ENCODE measurements at regions of chr13 and their contacts with region 1.

Region 1: GRCh38 chr13:91185294-91185863 is 162.1 kb upstream of the MIR17HG start:
- DNase-seq: no peak
- ATAC-seq: no peak
- H3K4me3 ChIP-seq: no peak overlapping the region
- H3K27ac ChIP-seq: no peak overlapping the region
- H3K4me1 ChIP-seq: no peaks in the 10 kb centered on the region
- H3K27me3 ChIP-seq: no peaks in the 10 kb centered on the region

Region 2: GRCh38 chr13:91078093-91078679 is 107.2 kb before region 1 on chr13:
- intact Hi-C with region 1: loop called (anchors 5 kb)
- DNase-seq: no peak
- ATAC-seq: no peak
- H3K4me3 ChIP-seq: no peak overlapping the region
- H3K27ac ChIP-seq: no peak overlapping the region
- H3K4me1 ChIP-seq: no peaks in the 10 kb centered on the region
- H3K27me3 ChIP-seq: no peaks in the 10 kb centered on the region

Region 3: GRCh38 chr13:91133941-91134802 is 51.2 kb before region 1 on chr13:
- intact Hi-C with region 1: loop called in 1 of 2 experiments (anchors 5 kb)
- DNase-seq: no peak
- ATAC-seq: peak; percentile 82
- H3K4me3 ChIP-seq: no peak overlapping the region
- H3K27ac ChIP-seq: no peak overlapping the region
- H3K4me1 ChIP-seq: peaks cover 0 to 7% of the 10 kb centered on the region in 2 donors
- H3K27me3 ChIP-seq: no peaks in the 10 kb centered on the region